Mammary epithelial cell (primary cell): ENCODE measurements at regions of chr3 and their contacts with region 1.

Region 1: GRCh38 chr3:25461946-25462345 is 33.9 kb downstream of the RARB start:
- DNase-seq: peak; percentile 66
- H3K4me3 ChIP-seq: no peak overlapping the region
- H3K27ac ChIP-seq: no peak overlapping the region
- H3K4me1 ChIP-seq: peaks cover 18% of the 10 kb centered on the region
- H3K27me3 ChIP-seq: no peaks in the 10 kb centered on the region
- CTCF ChIP-seq: peak in 1 of 2 donors; percentile 1

Region 2: DNA sequence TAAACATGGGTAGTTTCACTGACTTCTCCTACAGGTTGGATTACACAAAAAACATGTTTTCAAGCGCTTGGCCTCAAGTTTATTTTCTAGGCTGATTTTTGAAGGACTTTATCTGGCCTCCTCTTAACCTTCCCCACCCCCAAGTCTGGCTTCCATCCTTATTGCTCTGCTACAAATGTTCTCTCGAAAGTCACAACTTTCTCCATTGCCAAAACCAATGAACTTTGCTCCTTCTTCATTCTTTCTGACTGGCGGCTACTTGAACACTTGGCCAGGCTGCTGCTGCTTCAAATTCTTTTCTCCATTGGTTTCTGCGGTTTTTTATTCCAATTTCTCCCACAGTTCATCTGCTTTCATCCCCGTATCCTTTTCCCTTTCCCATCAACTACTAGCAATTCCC is 96.2 kb after region 1 on chr3:
- CTCF ChIA-PET with region 1: interaction called, 15 read pairs
- dilution Hi-C with region 1: no loop called
- in situ Hi-C with region 1: no loop called
- intact Hi-C with region 1: no loop called
- DNase-seq: no peak
- H3K4me3 ChIP-seq: no peak overlapping the region
- H3K27ac ChIP-seq: no peak overlapping the region
- H3K4me1 ChIP-seq: no peaks in the 10 kb centered on the region
- H3K27me3 ChIP-seq: no peaks in the 10 kb centered on the region
- CTCF ChIP-seq: no peak

Region 3: DNA sequence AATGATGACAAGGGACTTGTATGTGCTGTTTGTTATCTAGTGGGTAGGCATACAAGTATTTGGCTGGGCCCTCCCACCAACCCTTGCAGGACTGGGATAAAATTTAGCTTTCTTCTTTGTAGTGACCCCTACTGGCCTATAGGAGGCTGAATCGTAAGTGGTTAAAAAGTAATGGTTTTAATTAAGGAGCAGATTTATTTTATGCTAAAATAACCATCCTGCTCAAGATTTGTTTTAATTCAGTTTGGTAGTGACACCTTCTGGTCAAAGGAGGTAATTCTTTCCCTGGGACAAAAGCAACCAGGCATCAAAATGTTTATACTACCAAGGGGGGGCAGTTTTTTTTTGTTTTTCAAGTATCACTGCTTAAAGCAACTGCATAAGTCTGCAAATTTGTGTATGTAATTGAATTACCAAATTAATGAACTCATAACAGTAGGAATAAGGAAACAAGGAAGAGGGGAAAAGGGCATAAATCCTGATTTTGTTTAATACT is 132.1 kb after region 1 on chr3:
- CTCF ChIA-PET with region 1: no interaction called
- dilution Hi-C with region 1: no loop called
- in situ Hi-C with region 1: no loop called
- intact Hi-C with region 1: no loop called
- DNase-seq: peak; percentile 58
- H3K4me3 ChIP-seq: no peak overlapping the region
- H3K27ac ChIP-seq: no peak overlapping the region
- H3K4me1 ChIP-seq: peaks cover 4% of the 10 kb centered on the region
- H3K27me3 ChIP-seq: no peaks in the 10 kb centered on the region
- CTCF ChIP-seq: peak; percentile 64 to 68